Psoas muscle (tissue), 8 donors: ENCODE measurements at regions of chr20 and their contacts with region 1.

Region 1: DNA sequence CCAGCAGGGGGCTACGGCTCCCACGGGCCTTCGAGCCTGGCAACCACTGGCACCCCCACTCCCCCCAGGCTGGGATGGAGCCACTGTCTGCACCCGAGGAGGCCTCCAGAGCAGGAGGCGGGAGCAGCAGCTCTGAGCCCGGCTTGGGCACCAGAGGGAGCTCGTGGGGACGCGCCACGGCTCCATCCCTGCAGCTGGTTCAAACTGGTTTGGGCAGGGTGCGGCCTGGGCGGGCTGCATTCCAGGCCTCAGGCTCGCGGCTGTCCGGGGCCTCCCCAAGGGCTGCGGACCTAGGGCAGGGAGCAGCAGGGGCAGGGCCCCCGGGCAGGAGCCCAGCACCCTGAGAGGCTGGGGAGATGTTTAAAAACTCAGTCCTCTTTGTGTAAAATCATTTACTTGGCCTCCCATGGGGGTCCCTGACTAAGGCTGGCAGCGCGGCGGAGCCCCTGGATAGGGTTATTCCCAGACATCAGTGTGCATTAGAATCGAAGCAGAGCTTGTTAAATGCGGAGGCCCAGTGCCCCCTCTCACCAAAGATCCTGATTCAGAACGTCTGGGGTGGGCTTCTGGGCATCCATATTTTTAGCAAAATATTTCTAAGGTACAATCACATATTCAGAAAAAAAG is 4.1 kb upstream of the BCAS4 start:
- DNase-seq: peak; percentile 82 to 91
- ATAC-seq: peak; percentile 69 to 80 (median 77)
- H3K4me3 ChIP-seq: peak overlapping the region; percentile 38
- H3K27ac ChIP-seq: peak overlapping the region; percentile 53
- H3K4me1 ChIP-seq: peaks cover 4% of the 10 kb centered on the region
- H3K27me3 ChIP-seq: no peaks in the 10 kb centered on the region
- CTCF ChIP-seq: peak; percentile 61

Region 2: DNA sequence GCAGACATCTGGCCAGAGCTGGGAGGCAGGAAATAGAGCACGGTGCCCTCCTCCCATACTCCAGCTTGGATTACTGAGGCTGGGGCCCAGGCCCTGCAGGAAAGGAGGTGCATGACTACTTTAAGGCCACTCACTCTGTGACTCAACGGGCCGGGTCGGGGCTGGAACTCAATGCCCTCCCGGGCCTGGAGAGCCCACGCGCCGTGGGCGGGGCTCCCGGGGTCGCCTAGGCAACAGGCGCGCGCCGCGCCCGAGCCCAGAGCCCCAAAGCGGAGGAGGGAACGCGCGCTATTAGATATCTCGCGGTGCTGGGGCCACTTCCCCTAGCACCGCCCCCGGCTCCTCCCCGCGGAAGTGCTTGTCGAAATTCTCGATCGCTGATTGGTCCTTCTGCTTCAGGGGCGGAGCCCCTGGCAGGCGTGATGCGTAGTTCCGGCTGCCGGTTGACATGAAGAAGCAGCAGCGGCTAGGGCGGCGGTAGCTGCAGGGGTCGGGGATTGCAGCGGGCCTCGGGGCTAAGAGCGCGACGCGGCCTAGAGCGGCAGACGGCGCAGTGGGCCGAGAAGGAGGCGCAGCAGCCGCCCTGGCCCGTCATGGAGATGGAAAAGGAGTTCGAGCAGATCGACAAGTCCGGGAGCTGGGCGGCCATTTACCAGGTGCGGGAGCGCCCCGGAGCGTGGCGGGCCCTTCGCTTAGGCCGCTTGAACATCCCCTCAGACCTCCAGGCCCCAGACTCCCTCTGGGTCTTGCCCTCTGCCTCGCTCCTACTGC is 280.6 kb before region 1 on chr20 and contains the start of gene PTPN1:
- intact Hi-C with region 1: no loop called
- DNase-seq: peak; percentile 99
- ATAC-seq: peak; percentile 88 to 96 (median 91)
- H3K4me3 ChIP-seq: peak within 1 kb of the TSS; percentile 99
- H3K27ac ChIP-seq: peak within 1 kb of the TSS; percentile 98
- H3K4me1 ChIP-seq: peaks cover 44% of the 10 kb centered on the region
- H3K27me3 ChIP-seq: no peaks in the 10 kb centered on the region
- CTCF ChIP-seq: no peak
- total RNA-seq, gene PTPN1: 29.7 to 112 (median 56.3) TPM

Region 3: GRCh38 chr20:50919567-50919966 is 128.8 kb after region 1 on chr20:
- intact Hi-C with region 1: loop called in 1 of 2 experiments (anchors 5 kb)
- DNase-seq: peak; percentile 61 to 74
- ATAC-seq: peak in 3 of 4 donors; percentile 70 to 81 (median 75)
- H3K4me3 ChIP-seq: no peak overlapping the region
- H3K27ac ChIP-seq: no peak overlapping the region
- H3K4me1 ChIP-seq: peaks cover 82% of the 10 kb centered on the region
- H3K27me3 ChIP-seq: no peaks in the 10 kb centered on the region
- CTCF ChIP-seq: no peak

Region 4: DNA sequence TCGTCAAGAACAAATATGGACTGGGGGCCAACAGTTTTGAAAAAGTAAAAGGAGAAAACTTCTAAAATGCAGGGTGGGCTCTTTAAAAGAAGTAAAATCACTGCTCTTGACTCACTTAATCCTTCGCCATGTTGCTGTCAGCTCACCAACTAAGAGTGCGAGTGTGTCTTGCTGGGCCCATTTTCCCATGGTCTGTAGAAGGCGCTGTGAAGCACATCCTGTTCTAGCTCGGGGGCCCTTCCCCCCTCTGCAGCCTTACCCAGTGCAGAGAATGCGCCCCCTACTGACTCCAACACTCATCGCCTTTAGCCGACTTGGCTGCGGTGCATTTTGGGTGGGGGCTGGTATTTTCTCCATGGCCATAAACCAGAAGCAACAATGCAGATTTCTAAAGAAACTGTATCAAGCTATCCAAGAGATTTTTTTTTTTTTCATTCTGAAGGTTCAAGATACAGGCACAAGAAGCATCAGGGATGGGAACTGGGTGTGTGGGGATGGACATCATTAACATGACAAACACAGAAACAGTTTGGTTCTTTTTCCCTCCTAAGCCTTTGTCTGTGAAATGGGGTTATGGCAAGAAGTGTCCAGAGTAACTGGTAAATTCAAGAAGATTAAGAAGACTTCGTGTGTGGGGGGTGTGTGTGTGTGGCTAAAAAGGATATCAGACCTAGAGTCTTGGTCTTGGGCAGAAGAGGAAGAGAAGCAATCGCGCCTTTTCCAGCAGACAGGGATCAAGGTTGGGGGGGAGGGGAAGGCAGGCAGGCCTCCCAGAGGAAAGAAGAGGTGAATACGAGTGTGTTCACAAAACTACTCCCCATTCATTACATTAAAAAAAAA is 138.8 kb after region 1 on chr20:
- intact Hi-C with region 1: loop called (anchors 5 kb)
- DNase-seq: peak; percentile 86 to 90
- ATAC-seq: peak; percentile 44 to 79 (median 76)
- H3K4me3 ChIP-seq: peak overlapping the region; percentile 82
- H3K27ac ChIP-seq: peak overlapping the region; percentile 77
- H3K4me1 ChIP-seq: peaks cover 52% of the 10 kb centered on the region
- H3K27me3 ChIP-seq: no peaks in the 10 kb centered on the region
- CTCF ChIP-seq: peak; percentile 70

Region 5: DNA sequence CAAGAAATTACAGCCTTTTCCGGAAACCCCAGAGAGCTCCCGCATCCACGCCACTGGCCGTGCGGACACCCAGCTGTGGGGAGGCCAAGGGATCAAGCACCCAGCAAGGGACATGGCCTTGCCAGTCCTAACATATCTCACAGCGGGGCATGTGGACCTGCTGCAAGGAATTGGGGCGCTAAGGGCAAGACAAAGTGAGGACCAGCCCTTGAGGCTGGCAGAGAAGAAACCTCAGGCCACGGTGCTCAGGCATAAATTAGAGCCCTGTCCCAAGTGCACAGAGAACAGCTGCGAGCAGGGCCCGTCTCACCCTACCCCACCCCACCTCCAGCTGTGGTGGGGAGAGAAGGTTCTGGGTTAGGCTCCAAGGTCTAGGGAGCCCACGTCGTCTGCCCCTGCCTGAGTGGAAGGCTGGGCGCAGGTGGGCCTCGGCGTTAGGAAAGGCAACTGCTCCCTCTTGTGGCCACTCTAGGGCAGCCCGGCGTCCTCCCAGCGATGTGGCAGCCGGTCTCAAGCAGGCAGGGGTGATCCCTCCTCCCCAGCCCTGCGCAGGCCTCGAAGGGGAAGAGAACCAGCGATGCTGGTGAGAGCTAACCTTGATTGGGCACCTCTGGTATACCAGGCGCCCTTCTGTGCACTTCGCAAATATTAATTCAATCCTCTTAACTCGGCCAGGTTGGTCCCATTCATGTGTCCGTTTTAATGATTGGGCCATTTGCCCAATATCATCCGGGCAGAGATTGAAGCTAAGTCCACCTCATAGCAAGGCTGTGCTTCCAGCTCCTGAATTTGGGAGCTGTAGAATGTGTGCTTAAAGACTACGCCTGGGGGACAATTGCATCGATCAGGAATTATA is 516.0 kb after region 1 on chr20:
- intact Hi-C with region 1: loop called (anchors 2 to 5 kb)
- DNase-seq: peak; percentile 66 to 83
- ATAC-seq: peak; percentile 85 to 96 (median 92)
- H3K4me3 ChIP-seq: no peak overlapping the region
- H3K27ac ChIP-seq: no peak overlapping the region
- H3K4me1 ChIP-seq: no peaks in the 10 kb centered on the region
- H3K27me3 ChIP-seq: peaks cover 0 to 1% (median 0%) of the 10 kb centered on the region in 3 donors
- CTCF ChIP-seq: peak; percentile 90